Activated T-helper 2 cell treated with anti-CD3 and anti-CD28 coated beads, Interferon-gamma antibody, Interleukin-2, Interleukin-4, amounts not matched to agents 10 μg/mL and 5 μg/mL and 100 μg/mL, durations not matched to agents 14 hours and 24 hours and 36 hours (primary cell): ENCODE measurements at regions of chr12 and their contacts with region 1.

Region 1: DNA sequence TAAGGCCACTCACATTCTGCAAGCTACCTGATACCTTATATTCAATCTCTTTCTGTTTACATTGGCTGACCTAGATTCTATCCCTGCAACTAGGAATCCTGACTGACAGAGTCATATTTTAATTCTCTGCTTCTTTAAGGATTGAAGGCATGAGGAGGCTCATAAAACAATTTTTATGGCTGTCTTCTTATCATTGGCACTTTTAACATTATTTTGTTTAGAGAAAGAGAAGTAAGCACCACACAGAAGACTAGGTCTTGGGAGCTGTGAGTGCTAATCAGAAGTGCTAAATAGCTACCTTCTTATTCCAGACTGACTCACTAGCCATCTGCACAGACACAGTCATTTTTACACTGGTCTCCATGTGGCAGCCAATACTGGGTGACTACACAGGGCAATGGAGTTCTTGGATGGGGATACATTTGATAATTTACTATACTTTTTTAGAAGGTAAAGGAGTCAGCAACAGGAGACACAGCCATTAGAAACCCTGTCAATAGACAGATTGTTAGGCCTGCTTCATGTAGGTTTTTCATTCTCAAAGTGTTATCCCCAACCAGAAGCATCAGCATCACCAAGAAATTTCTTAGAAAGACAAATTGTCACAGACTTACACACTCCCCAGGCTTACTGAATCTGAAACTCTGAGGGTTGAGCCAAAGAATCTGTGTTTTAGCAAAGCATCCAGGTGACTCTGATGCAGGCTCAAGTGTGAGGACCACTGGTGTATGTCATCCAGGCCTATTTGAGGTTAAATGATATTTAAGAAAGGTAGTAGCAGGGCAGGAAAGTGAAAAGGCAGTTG is 214.1 kb downstream of the DUSP6 start:
- DNase-seq: no peak
- H3K4me3 Mint-ChIP-seq: no peak overlapping the region
- H3K27ac Mint-ChIP-seq: peak overlapping the region; percentile 68
- H3K4me1 Mint-ChIP-seq: peaks cover 39% of the 10 kb centered on the region
- H3K27me3 Mint-ChIP-seq: no peaks in the 10 kb centered on the region

Region 2: GRCh38 chr12:89156862-89157262 is 18.6 kb after region 1 on chr12:
- intact Hi-C with region 1: loop called (anchors 1 kb)
- DNase-seq: no peak
- H3K4me3 Mint-ChIP-seq: no peak overlapping the region
- H3K27ac Mint-ChIP-seq: peak overlapping the region; percentile 39
- H3K4me1 Mint-ChIP-seq: peaks cover 30% of the 10 kb centered on the region
- H3K27me3 Mint-ChIP-seq: no peaks in the 10 kb centered on the region

Region 3: DNA sequence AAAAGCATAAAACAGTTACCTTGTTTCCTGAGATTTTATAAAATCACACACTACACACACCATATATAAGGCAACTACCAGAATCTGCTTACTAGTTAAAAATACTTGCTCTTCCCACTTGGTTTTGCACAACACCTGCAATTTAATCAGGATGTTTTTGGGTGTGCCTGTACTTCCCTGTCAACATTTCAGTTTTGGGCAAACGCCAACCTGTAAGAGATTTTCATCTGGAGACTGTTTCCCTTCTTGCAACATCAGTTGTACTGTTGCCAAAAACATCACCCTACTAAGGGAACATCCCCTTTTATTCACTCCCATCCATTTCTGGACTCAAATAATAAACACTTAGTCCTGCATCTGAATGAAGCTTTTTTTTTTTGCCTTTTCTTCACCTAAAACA is 41.7 kb after region 1 on chr12:
- intact Hi-C with region 1: loop called (anchors 1 kb)
- DNase-seq: no peak
- H3K4me3 Mint-ChIP-seq: peak overlapping the region; percentile 50
- H3K27ac Mint-ChIP-seq: peak overlapping the region; percentile 86
- H3K4me1 Mint-ChIP-seq: peaks cover 71% of the 10 kb centered on the region
- H3K27me3 Mint-ChIP-seq: no peaks in the 10 kb centered on the region

Region 4: GRCh38 chr12:89566630-89567151 is 428.4 kb after region 1 on chr12:
- intact Hi-C with region 1: no loop called
- DNase-seq: no peak
- H3K4me3 Mint-ChIP-seq: no peak overlapping the region
- H3K27ac Mint-ChIP-seq: peak overlapping the region; percentile 56
- H3K4me1 Mint-ChIP-seq: peaks cover 42% of the 10 kb centered on the region
- H3K27me3 Mint-ChIP-seq: peaks cover 3% of the 10 kb centered on the region